A673 (cell line): ENCODE measurements at regions of chr12 and their contacts with region 1.

Region 1: DNA sequence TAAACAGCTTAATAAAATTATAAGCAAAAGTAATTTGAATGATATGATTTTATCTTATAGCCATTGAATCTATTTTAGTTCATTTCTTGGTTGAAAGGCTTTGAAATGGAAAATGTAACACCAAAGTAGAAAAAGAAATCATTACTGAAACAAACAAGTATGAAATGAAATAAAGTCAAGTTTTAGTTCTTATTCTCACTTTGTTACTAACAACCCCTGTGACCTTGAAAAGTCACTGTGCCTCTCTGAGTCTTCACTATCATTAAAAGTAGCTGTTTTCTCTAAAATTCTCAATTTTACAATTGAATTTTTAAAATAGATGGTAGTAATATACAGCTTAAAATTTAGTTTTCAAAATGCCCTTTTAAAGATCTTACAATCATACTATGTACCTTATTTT is 32.4 kb upstream of the SLC17A8 start:
- DNase-seq: no peak
- H3K4me3 ChIP-seq: no peak overlapping the region
- H3K27ac ChIP-seq: no peak overlapping the region
- H3K4me1 ChIP-seq: no peaks in the 10 kb centered on the region
- H3K27me3 ChIP-seq: no peaks in the 10 kb centered on the region
- CTCF ChIP-seq: no peak

Region 2: GRCh38 chr12:100266835-100267618 is 57.5 kb before region 1 on chr12 and contains the starts of genes DEPDC4 and SCYL2:
- CTCF ChIA-PET with region 1: no interaction called
- POLR2A ChIA-PET with region 1: interaction called, 13 read pairs
- intact Hi-C with region 1: no loop called
- DNase-seq: peak; percentile 95
- H3K4me3 ChIP-seq: peak within 1 kb of the TSS; percentile 82
- H3K27ac ChIP-seq: peak within 1 kb of the TSS; percentile 93
- H3K4me1 ChIP-seq: peaks cover 49% of the 10 kb centered on the region
- H3K27me3 ChIP-seq: no peaks in the 10 kb centered on the region
- CTCF ChIP-seq: no peak
- total RNA-seq, gene DEPDC4: 2.0 and 3.2 TPM in 2 replicates
- total RNA-seq, gene SCYL2: 51.8 and 61.3 TPM in 2 replicates

Region 3: DNA sequence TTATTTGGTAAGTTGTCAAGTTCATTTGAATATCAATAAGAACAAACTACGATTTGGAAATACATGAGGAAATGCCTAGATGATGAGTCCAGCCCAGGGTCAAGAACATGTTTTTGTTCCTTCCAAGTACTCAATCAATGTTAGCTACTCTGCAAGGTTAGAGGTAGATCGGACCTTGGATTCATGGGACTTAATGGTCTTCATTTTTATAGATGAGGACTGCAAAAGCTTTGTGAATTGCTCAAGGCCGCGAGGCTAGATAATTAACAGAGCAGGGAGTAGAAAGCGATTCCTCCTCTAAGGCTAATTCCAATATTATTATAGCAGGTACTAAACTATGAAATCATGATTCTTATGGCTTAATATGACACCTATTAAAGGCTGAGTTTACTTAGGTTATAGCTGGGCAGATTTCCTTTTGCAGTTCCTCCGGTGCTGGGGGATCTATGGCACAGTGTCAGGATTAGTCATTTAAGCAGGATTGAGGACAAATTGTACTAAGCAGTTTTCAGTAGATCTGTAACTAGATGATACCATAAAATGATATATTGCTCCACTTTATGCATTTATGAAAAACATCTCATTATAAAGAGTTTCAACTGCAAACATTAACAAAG is 169.0 kb after region 1 on chr12:
- CTCF ChIA-PET with region 1: no interaction called
- POLR2A ChIA-PET with region 1: no interaction called
- intact Hi-C with region 1: no loop called
- DNase-seq: no peak
- H3K4me3 ChIP-seq: no peak overlapping the region
- H3K27ac ChIP-seq: no peak overlapping the region
- H3K4me1 ChIP-seq: no peaks in the 10 kb centered on the region
- H3K27me3 ChIP-seq: no peaks in the 10 kb centered on the region
- CTCF ChIP-seq: no peak